ENCODE measurements at regions of chr16 and their contacts with region 1.

Region 1: DNA sequence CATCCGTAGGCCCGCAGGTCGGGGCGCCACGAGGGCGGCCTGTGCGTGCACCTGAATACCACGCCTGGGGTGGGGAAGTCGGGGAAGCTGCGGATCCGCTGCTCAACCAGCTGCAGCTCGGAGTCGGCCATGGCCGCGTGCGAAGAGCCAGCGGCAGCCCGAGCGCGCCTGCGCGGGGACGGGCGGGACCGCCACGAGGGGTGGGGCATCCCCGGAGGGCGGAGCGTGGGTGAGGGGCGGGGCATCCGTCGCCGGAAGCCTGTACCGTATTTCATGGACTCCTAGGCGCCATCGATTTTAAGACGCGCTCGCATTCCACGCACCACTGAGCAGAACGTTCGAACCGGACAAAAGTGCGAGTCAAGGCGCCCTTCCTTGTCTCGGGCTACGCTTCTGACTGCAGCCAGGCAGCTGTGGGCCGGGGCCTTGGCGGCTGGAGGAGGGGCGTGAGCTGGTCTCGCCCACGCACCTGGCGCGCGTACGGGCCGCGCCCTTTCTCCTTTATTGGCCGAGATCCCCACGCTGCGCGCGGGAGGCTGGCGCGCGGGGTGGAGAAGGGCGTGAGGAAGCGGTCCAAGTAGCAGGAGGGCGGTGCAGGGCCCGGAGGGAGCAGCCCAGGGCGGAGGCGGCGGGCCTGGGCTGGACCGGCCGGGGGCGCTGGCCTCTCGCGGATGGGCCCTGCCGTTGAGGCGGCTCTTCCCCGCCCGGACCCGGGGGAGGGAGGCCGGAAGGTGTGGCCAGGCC is at the start of gene APRT:
- DNase-seq: peak; percentile 94 to 97
- ATAC-seq: peak; percentile 90 to 96 (median 94)
- H3K4me3 ChIP-seq: peak within 1 kb of the TSS; percentile 43 to 94 (median 80)
- H3K27ac ChIP-seq: peak within 1 kb of the TSS; percentile 87 to 97 (median 94)
- H3K4me1 ChIP-seq: peaks cover 12 to 40% (median 30%) of the 10 kb centered on the region in 9 donors
- H3K27me3 ChIP-seq: no peaks in the 10 kb centered on the region
- CTCF ChIP-seq: peak in 6 of 9 donors; percentile 29 to 63 (median 54)
- total RNA-seq, gene APRT: 20.8 to 58.0 (median 35.4) TPM

Region 2: DNA sequence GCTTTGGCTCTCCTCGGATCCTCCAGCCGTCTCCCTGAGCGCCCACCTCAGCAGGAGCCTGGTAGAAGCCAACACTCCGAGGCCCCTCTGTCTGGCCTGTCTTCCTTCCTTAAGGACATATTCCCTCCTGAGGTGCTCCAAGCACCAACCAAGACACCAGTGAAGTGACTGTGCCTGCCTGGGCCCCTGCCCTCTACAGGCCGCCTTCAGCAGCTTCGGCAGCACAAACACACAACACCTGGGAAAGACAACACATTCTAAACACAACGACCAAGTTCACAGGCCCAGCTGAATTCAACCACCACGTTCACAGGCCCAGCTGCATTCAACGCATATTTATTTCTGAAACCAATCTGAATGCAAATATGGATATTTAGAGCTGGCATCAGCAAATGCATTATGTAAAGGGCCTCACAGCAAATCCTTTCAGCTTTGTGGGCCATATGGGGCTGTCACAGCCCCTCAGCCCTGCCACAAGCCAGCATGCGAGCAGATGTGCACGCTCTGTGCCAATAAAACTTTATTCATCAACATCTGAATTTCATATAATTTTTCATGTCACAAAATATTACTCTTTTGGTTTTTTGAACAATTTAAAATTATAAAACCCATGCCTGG is 32.6 kb after region 1 on chr16:
- intact Hi-C with region 1: no loop called
- DNase-seq: no peak
- ATAC-seq: no peak
- H3K4me3 ChIP-seq: no peak overlapping the region
- H3K27ac ChIP-seq: no peak overlapping the region
- H3K4me1 ChIP-seq: peaks cover 0 to 4% (median 0%) of the 10 kb centered on the region in 9 donors
- H3K27me3 ChIP-seq: no peaks in the 10 kb centered on the region
- CTCF ChIP-seq: no peak

Region 3: GRCh38 chr16:88856828-88857733 is 45.1 kb after region 1 on chr16 and contains the starts of genes GALNS and TRAPPC2L:
- intact Hi-C with region 1: loop called in 7 of 10 experiments (anchors 1 to 5 kb)
- DNase-seq: peak; percentile 99 to 100
- ATAC-seq: peak; percentile 97 to 98 (median 98)
- H3K4me3 ChIP-seq: peak within 1 kb of the TSS; percentile 71 to 99 (median 93)
- H3K27ac ChIP-seq: peak within 1 kb of the TSS; percentile 32 to 88 (median 82)
- H3K4me1 ChIP-seq: peaks cover 10 to 50% (median 22%) of the 10 kb centered on the region in 9 donors
- H3K27me3 ChIP-seq: no peaks in the 10 kb centered on the region
- CTCF ChIP-seq: no peak
- total RNA-seq, gene GALNS: 11.5 to 18.7 (median 13.8) TPM
- total RNA-seq, gene TRAPPC2L: 44.5 to 58.0 (median 50.9) TPM

Region 4: GRCh38 chr16:88920618-88921590 is 109.0 kb after region 1 on chr16:
- intact Hi-C with region 1: loop called in 1 of 10 experiments (anchors 5 kb)
- DNase-seq: peak; percentile 82 to 85
- ATAC-seq: peak; percentile 69 to 90 (median 86)
- H3K4me3 ChIP-seq: peak overlapping the region in 7 of 10 donors; percentile 7 to 48 (median 28)
- H3K27ac ChIP-seq: peak overlapping the region; percentile 58 to 89 (median 78)
- H3K4me1 ChIP-seq: peaks cover 32 to 72% (median 63%) of the 10 kb centered on the region in 9 donors
- H3K27me3 ChIP-seq: no peaks in the 10 kb centered on the region
- CTCF ChIP-seq: no peak

Region 5: GRCh38 chr16:89155184-89155679 is 343.3 kb after region 1 on chr16:
- intact Hi-C with region 1: loop called in 4 of 10 experiments (anchors 10 kb)
- DNase-seq: peak; percentile 68 to 74
- ATAC-seq: peak; percentile 66 to 89 (median 78)
- H3K4me3 ChIP-seq: no peak overlapping the region
- H3K27ac ChIP-seq: peak overlapping the region in 3 of 10 donors; percentile 3 to 38 (median 4)
- H3K4me1 ChIP-seq: peaks cover 17 to 30% (median 28%) of the 10 kb centered on the region in 9 donors
- H3K27me3 ChIP-seq: peaks cover 0 to 8% (median 0%) of the 10 kb centered on the region in 7 donors
- CTCF ChIP-seq: no peak

Region 6: GRCh38 chr16:89171463-89172170 is 359.7 kb after region 1 on chr16 and contains the start of gene CDH15:
- intact Hi-C with region 1: loop called in 6 of 10 experiments (anchors 5 to 10 kb)
- DNase-seq: peak; percentile 83 to 90
- ATAC-seq: peak; percentile 88 to 92 (median 92)
- H3K4me3 ChIP-seq: peak within 1 kb of the TSS in 9 of 10 donors; percentile 0 to 45 (median 31)
- H3K27ac ChIP-seq: no peak within 1 kb of the TSS
- H3K4me1 ChIP-seq: peaks cover 0 to 25% (median 17%) of the 10 kb centered on the region in 9 donors
- H3K27me3 ChIP-seq: peaks cover 14 to 73% (median 62%) of the 10 kb centered on the region in 7 donors
- CTCF ChIP-seq: no peak
- total RNA-seq, gene CDH15: 0.08 to 0.16 TPM in 2 of 10 donors, not detected in the others

Region 7: GRCh38 chr16:89217388-89218191 is 405.6 kb after region 1 on chr16 and contains the start of gene ZNF778:
- intact Hi-C with region 1: loop called in 1 of 10 experiments (anchors 5 kb)
- DNase-seq: peak; percentile 82 to 84
- ATAC-seq: peak; percentile 94 to 97 (median 96)
- H3K4me3 ChIP-seq: peak within 1 kb of the TSS; percentile 76 to 99 (median 94)
- H3K27ac ChIP-seq: peak within 1 kb of the TSS; percentile 91 to 99 (median 96)
- H3K4me1 ChIP-seq: peaks cover 0 to 33% (median 29%) of the 10 kb centered on the region in 9 donors
- H3K27me3 ChIP-seq: no peaks in the 10 kb centered on the region
- CTCF ChIP-seq: no peak
- total RNA-seq, gene ZNF778: 5.9 to 11.3 (median 8.8) TPM

Region 8: DNA sequence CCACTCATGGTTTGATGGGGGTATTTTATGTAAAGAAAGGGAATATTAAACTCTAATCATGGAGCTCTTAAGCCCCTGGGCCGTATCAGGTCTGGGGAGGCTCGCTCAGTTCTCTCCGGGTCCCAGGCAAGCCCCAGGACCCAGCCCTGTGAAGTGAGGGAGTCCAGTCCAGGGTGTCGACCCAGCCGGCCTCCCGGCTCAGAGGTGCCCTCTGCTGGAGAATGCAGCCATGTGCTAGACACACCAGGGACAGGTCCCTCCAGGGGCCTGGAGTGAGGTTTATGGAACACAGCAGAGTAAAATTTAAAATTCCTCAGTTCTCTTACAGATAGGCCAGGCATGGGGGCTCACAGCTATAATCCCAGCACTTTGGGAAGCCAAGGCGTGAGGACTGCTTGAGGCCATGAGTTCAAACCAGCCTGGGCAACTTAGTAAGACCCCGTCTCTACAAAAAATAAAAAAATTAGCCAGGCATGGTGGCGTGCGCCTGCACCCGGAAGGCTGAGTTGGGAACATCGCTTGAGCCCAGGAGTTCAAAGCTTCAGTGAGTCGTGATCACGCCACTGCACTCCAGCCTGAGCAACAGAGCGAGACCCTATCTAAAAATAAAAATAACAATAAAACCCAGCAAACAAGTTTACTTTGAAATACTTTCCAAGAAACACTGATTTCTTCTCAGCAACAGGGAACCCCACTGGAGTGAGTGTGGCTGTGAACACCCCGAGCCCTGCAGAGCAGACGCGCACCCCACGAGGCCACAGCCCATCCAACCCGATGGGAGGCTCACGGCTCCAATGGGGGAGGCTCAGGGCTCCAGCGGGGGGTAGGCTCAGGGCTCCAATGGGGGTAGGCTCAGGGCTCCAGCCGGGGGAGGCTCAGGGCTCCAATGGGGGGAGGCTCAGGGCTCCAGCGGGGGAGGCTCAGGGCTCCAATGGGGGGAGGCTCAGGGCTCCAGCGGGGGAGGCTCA is 477.8 kb after region 1 on chr16:
- intact Hi-C with region 1: no loop called
- DNase-seq: peak; percentile 61 to 77
- ATAC-seq: peak; percentile 68 to 86 (median 81)
- H3K4me3 ChIP-seq: no peak overlapping the region
- H3K27ac ChIP-seq: no peak overlapping the region
- H3K4me1 ChIP-seq: peaks cover 0 to 19% (median 10%) of the 10 kb centered on the region in 9 donors
- H3K27me3 ChIP-seq: no peaks in the 10 kb centered on the region
- CTCF ChIP-seq: peak; percentile 66 to 87 (median 80)